ENCODE measurements at regions of chr6 and their contacts with region 1.

Region 1: GRCh38 chr6:30877419-30878371 is 6.6 kb upstream of the DDR1 start:
- DNase-seq: peak; percentile 88 to 94 (median 92)
- H3K4me3 ChIP-seq: peak overlapping the region; percentile 30
- H3K27ac ChIP-seq: peak overlapping the region; percentile 39 to 72
- H3K4me1 ChIP-seq: peaks cover 8% of the 10 kb centered on the region
- H3K27me3 ChIP-seq: no peaks in the 10 kb centered on the region
- CTCF ChIP-seq: peak; percentile 83 to 93 (median 92)
- EP300 ChIP-seq: no peak
- POLR2A ChIP-seq: no peak

Region 2: DNA sequence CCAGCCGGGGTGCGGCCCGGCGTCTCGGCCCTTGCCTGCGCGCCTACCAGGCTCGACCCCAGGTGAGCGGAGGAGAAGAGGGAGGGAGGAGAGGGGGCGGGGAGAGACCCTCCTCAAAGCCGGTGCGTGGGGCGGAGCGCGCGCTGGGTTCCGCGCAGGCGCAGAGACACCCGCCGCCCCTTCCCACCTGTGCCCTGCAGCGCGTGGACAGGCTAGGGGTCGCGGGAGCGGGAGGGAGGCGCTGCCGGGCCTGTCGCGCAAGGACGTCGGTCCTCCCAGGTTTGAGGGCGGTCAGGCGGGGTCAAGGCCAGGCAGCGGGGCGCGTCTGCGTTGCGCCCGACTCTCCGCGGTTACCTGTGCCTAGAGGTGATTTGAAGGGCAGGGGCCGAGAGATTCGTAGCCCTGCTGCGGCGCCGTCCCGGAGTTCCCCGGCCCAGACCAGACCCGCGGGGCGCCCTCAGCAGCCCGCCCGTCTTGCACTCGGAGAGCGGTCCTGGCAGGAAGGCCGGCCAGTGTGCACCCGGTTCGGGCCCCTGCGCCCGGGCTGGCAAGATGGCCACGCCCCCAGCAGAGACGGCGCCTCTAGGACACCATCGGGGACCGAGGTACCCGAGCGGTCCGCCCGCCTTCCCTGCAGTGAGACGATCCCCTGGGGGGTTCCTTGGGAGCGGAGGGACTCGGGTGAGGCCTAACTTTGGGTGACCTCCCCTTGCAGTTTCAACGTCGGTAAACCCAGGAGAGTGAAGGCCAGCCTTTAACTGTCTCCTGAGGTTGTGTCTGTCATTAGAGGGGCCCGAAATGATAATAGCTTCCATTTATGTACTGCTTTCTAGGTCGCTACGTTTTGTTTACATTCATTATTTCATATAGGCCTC is 230.2 kb before region 1 on chr6:
- intact Hi-C with region 1: no loop called
- DNase-seq: peak; percentile 61 to 80 (median 71)
- H3K4me3 ChIP-seq: peak overlapping the region; percentile 82
- H3K27ac ChIP-seq: peak overlapping the region; percentile 36 to 81
- H3K4me1 ChIP-seq: no peaks in the 10 kb centered on the region
- H3K27me3 ChIP-seq: no peaks in the 10 kb centered on the region
- CTCF ChIP-seq: no peak
- EP300 ChIP-seq: no peak
- POLR2A ChIP-seq: no peak

Region 3: DNA sequence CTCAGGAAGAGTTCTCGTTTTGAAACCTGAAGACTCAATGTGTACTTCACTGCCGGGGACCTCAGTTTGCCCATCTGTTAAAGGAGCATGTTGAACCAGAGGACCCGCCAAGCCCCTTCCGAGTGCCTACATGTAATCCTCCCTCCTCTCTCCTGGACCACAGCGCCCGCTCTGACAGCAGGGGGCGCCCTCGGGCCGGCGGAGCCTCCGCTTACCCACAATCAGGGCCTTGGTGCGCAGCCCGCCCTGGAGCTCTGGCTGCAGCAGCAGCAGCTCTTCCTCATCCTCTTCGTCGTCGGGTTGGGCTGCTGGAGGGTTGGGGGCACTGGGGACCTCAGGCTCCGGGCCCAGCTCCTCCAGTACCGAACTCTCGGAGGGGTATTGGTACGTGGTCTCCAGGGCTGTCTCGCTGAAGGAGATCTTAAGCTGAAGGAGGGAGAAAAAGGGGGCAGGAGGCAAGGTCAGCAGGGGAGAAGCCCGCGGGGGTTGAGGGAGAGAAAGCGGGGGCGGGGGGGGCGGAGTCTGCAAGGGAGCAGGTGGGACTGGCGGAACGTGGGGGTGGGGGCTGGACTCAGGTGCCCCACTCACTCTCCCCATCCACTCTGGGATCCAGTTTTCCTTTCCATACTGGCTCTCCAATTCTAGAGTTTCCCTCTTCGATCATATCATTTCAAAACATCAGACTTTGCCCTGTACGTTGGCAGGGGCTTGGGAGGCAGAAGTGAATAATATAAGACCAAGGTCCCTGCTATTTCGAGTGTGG is 198.6 kb before region 1 on chr6:
- intact Hi-C with region 1: loop called in 3 of 4 experiments (anchors 5 to 10 kb)
- DNase-seq: peak; percentile 79 to 92 (median 90)
- H3K4me3 ChIP-seq: no peak overlapping the region
- H3K27ac ChIP-seq: peak overlapping the region in 1 of 2 donors; percentile 2
- H3K4me1 ChIP-seq: peaks cover 10% of the 10 kb centered on the region
- H3K27me3 ChIP-seq: no peaks in the 10 kb centered on the region
- CTCF ChIP-seq: peak; percentile 89 to 96 (median 96)
- EP300 ChIP-seq: no peak
- POLR2A ChIP-seq: no peak

Region 4: DNA sequence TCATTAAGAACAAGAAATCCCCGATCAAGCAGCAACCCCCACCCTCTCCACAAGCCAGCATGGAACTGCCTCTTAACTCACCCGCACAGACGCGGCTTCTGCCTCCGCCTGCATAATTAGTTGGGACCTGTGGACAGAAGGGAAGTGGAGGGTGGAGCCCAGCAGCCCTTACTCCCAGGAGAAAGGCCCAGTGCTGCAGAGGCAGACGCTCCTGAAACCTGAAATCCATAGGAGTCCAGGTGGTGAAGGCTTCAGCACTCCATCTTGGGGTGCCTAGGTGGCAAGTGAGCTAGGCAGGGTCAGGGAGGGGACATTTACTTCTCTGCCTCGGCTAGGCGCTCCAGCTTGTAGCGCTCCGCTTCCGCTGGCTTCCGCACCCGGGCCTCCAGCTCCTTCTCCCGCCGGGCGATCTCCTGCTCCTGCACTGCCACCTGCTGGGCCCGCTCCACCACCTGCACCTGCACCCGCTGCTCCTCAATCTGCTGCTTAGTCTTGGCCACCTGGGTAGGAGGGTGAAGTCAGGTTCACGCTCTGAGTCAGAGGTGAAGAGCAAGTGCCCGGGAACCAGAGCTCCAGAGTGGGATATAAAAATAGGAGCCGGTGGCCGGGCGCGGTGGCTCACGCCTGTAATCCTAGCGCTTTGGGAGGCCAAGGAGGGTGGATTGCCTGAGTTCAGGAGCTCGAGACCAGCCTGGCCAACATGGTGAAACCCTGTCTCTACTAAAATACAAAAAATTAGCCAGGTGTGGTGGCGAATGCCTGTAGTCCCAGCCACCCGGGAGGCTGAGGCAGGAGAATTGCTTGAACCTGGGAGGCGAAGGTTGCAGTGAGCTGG is 146.9 kb before region 1 on chr6:
- intact Hi-C with region 1: loop called in 1 of 4 experiments (anchors 10 kb)
- DNase-seq: peak in 4 of 5 donors; percentile 60 to 72 (median 64)
- H3K4me3 ChIP-seq: no peak overlapping the region
- H3K27ac ChIP-seq: no peak overlapping the region
- H3K4me1 ChIP-seq: no peaks in the 10 kb centered on the region
- H3K27me3 ChIP-seq: no peaks in the 10 kb centered on the region
- CTCF ChIP-seq: peak in 2 of 3 donors; percentile 17 to 35
- EP300 ChIP-seq: no peak
- POLR2A ChIP-seq: no peak

Region 5: GRCh38 chr6:30974488-30975252 is 97.0 kb after region 1 on chr6:
- intact Hi-C with region 1: no loop called
- DNase-seq: no peak
- H3K4me3 ChIP-seq: no peak overlapping the region
- H3K27ac ChIP-seq: no peak overlapping the region
- H3K4me1 ChIP-seq: peaks cover 1% of the 10 kb centered on the region
- H3K27me3 ChIP-seq: no peaks in the 10 kb centered on the region
- CTCF ChIP-seq: no peak
- EP300 ChIP-seq: no peak
- POLR2A ChIP-seq: no peak

Measured in ovary (tissue), 10 donors.